ENCODE measurements at regions of chr20 and their contacts with region 1.

Region 1: GRCh38 chr20:34129518-34130162 is 17.6 kb upstream of the EIF2S2 start:
- DNase-seq: peak; percentile 55 to 60
- H3K4me3 ChIP-seq: no peak overlapping the region
- H3K27ac ChIP-seq: no peak overlapping the region
- H3K4me1 ChIP-seq: peaks cover 4% of the 10 kb centered on the region
- H3K27me3 ChIP-seq: no peaks in the 10 kb centered on the region
- CTCF ChIP-seq: peak; percentile 91

Region 2: DNA sequence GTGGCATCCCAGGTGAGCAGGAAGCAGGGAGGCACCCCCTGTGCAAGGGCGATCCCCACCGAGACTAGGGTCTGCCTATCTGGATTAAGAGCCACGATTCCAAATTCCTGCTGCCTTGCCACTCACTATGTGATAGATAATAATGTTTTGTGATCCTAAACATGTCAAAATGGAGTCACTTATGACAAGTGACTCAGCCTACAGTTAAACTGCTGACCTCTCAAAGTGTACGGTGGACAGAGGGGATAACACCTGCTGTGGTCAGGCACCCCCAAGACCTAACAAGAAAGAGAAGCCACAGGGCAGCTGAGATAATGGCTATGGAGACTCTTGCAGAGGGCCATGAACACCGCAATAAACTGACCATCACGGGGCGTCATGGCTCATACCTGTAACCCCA is 670.0 kb before region 1 on chr20:
- CTCF ChIA-PET with region 1: no interaction called
- POLR2A ChIA-PET with region 1: no interaction called
- intact Hi-C with region 1: loop called (anchors 5 kb)
- DNase-seq: no peak
- H3K4me3 ChIP-seq: no peak overlapping the region
- H3K27ac ChIP-seq: no peak overlapping the region
- H3K4me1 ChIP-seq: peaks cover 6% of the 10 kb centered on the region; the same call in 1 of the 2 replicates
- H3K27me3 ChIP-seq: no peaks in the 10 kb centered on the region
- CTCF ChIP-seq: no peak

Region 3: GRCh38 chr20:34037121-34037520 is 92.5 kb before region 1 on chr20:
- CTCF ChIA-PET with region 1: no interaction called
- POLR2A ChIA-PET with region 1: no interaction called
- intact Hi-C with region 1: no loop called
- DNase-seq: no peak
- H3K4me3 ChIP-seq: no peak overlapping the region
- H3K27ac ChIP-seq: no peak overlapping the region
- H3K4me1 ChIP-seq: no peaks in the 10 kb centered on the region
- H3K27me3 ChIP-seq: no peaks in the 10 kb centered on the region
- CTCF ChIP-seq: no peak

Region 4: GRCh38 chr20:34199183-34199582 is 69.5 kb after region 1 on chr20:
- CTCF ChIA-PET with region 1: no interaction called
- POLR2A ChIA-PET with region 1: no interaction called
- intact Hi-C with region 1: loop called (anchors 2 kb)
- DNase-seq: no peak
- H3K4me3 ChIP-seq: no peak overlapping the region
- H3K27ac ChIP-seq: no peak overlapping the region
- H3K4me1 ChIP-seq: no peaks in the 10 kb centered on the region
- H3K27me3 ChIP-seq: no peaks in the 10 kb centered on the region
- CTCF ChIP-seq: no peak

Region 5: DNA sequence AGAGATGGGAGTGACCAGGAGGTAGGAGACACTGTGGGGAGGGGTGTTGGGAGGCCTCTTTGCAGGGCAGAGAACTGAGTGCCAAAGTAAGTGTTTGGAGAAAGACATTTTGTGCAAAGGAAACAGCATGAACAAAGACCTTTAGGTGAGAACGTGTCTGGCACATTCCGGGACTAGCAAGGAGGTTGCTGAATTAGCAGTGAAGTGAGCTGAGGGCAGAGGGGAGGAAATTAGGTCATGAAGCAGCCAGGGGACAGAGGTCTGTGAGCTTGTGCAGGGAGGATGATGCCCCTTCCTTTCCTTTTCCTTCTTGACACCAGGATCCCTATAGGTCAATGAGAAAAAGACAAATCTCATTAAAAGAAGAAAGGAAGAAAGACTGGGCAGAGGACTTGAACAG is 194.9 kb after region 1 on chr20:
- CTCF ChIA-PET with region 1: no interaction called
- POLR2A ChIA-PET with region 1: no interaction called
- intact Hi-C with region 1: no loop called
- DNase-seq: no peak
- H3K4me3 ChIP-seq: no peak overlapping the region
- H3K27ac ChIP-seq: no peak overlapping the region
- H3K4me1 ChIP-seq: peaks cover 12% of the 10 kb centered on the region
- H3K27me3 ChIP-seq: no peaks in the 10 kb centered on the region
- CTCF ChIP-seq: no peak